HCT116 (cell line): ENCODE measurements at regions of chr22 and their contacts with region 1.

Region 1: DNA sequence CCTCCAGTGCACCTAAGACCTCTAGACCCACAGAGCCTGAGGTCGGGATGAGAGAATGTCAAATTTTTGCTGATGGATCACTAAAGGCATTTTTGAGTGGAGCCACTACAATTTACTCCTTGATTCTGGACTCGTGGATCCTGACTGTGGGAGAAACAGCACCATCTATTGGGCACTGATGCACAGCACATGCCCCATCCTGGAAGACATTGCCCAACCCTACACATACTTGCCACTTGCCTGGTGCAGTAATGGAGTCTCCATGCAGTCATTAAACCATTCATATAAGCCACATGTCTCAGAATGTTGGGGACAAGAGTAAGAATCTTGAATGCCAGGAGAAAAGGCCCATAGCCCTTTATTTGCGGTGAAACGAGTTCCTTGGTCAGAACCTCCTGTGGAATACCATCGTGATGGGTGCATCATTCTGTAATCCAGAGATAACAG is 103.9 kb downstream of the GGTLC2 start:
- DNase-seq: no peak
- ATAC-seq: peak; percentile 90
- H3K4me3 ChIP-seq: no peak overlapping the region
- H3K27ac ChIP-seq: no peak overlapping the region
- H3K4me1 ChIP-seq: peaks cover 0 to 4% of the 10 kb centered on the region in 2 experiments; a peak in 1 of 4 replicates
- H3K27me3 ChIP-seq: peaks cover 9% of the 10 kb centered on the region; the same call in 1 of the 2 replicates
- CTCF ChIP-seq: peak; percentile 63 to 79 (median 78); a peak in 5 of 6 replicates
- POLR2A ChIP-seq: no peak
- RAD21 ChIP-seq: peak; percentile 47

Region 2: DNA sequence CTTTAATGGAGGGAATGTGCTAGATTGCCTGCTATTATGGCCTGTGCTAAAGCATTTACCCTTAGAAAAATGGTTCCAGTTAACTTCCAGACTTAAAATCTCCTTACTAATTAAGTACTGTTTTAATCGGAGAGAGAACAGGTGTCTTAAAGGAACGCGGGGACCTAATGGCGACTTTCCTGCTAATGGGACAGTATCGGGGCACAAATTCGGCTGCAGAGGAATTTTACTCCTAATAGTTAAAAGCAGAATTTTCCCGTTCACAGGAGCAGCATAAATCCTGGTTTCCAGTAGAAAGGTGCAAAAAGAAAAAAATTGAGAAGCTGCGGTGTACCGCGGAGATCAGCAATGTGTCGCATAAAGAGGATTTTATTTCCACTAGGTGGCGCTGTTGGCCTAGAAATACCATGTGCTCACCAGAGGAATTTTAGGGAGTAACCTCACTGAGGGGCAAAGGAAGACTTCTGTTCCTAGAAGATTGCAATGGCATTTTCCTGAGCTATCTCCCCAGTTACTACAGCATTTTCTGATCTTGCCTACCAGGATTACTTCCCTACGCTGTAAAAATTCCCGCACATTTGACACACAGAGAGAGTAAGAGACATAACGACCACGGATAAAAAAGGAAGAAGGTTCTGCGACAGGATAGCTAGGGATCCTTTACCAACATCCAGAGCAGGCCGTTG is 284.3 kb before region 1 on chr22:
- CTCF ChIA-PET with region 1: interaction called, 10 read pairs
- POLR2A ChIA-PET with region 1: no interaction called
- RAD21 ChIA-PET with region 1: no interaction called
- intact Hi-C with region 1: loop called (anchors 10 kb)
- DNase-seq: peak; percentile 51
- ATAC-seq: peak; percentile 92
- H3K4me3 ChIP-seq: peak overlapping the region in 1 of 2 experiments; percentile 8; a peak in 1 of 4 replicates
- H3K27ac ChIP-seq: no peak overlapping the region
- H3K4me1 ChIP-seq: no peaks in the 10 kb centered on the region
- H3K27me3 ChIP-seq: no peaks in the 10 kb centered on the region
- CTCF ChIP-seq: peak; percentile 53 to 81 (median 59); a peak in 4 of 6 replicates
- POLR2A ChIP-seq: no peak
- RAD21 ChIP-seq: peak; percentile 78

Region 3: GRCh38 chr22:22666307-22667091 is 81.8 kb before region 1 on chr22:
- CTCF ChIA-PET with region 1: interaction called, 12 read pairs
- POLR2A ChIA-PET with region 1: no interaction called
- RAD21 ChIA-PET with region 1: no interaction called
- intact Hi-C with region 1: no loop called
- DNase-seq: no peak
- ATAC-seq: peak; percentile 99
- H3K4me3 ChIP-seq: no peak overlapping the region
- H3K27ac ChIP-seq: no peak overlapping the region
- H3K4me1 ChIP-seq: no peaks in the 10 kb centered on the region
- H3K27me3 ChIP-seq: no peaks in the 10 kb centered on the region
- CTCF ChIP-seq: peak; percentile 60 to 81 (median 64); a peak in 5 of 6 replicates
- POLR2A ChIP-seq: no peak
- RAD21 ChIP-seq: peak; percentile 51

Region 4: DNA sequence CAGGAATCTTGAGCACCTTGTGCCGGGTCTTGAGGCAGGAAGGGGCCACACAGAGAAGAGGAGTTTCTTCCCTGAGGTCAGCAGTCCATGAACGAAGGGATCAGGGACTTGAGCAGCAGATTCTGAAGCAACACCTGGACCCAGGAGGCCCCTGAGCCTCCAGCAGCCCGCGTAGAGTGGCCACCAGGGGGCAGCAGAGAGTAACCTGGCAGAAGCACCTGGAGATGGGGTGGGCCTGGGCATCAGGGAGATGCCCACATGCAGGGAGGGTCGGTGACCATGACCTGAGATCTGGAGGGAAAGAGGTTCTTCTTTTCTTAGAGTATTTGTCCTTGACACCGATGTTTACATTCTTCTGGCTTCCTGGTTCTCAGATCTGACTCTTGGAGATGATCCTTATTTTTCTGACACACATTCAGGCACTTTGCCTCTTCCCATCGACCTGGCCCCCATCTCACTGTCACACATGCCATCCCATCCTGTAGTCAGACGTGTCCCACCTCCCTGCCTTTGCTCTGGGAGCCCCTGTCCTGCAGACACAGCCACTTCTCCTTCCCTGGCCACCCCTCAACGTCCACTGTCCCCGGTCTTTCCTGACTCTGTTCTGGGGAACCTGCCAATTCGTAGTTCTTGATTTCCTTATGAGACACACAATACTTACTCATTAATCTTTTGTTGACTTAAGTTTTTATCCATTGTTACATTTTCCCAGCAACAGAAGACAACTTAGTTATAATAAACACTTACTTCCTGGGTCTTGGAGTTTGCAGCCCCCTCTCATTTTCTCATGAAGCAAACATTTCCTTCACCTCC is 37.4 kb before region 1 on chr22:
- CTCF ChIA-PET with region 1: interaction called, 10 read pairs
- POLR2A ChIA-PET with region 1: no interaction called
- RAD21 ChIA-PET with region 1: no interaction called
- intact Hi-C with region 1: no loop called
- DNase-seq: no peak
- ATAC-seq: peak; percentile 96
- H3K4me3 ChIP-seq: no peak overlapping the region
- H3K27ac ChIP-seq: no peak overlapping the region
- H3K4me1 ChIP-seq: no peaks in the 10 kb centered on the region
- H3K27me3 ChIP-seq: no peaks in the 10 kb centered on the region
- CTCF ChIP-seq: peak; percentile 61 to 98 (median 97); a peak in 5 of 6 replicates
- POLR2A ChIP-seq: no peak
- RAD21 ChIP-seq: peak; percentile 34; the same call in 1 of the 2 replicates

Region 5: GRCh38 chr22:22770280-22770871 is 22.1 kb after region 1 on chr22:
- CTCF ChIA-PET with region 1: interaction called, 22 read pairs
- POLR2A ChIA-PET with region 1: interaction called, 4 read pairs
- RAD21 ChIA-PET with region 1: interaction called in 1 of 2 experiments, 4 read pairs
- intact Hi-C with region 1: no loop called
- DNase-seq: no peak
- ATAC-seq: peak; percentile 96
- H3K4me3 ChIP-seq: no peak overlapping the region
- H3K27ac ChIP-seq: no peak overlapping the region
- H3K4me1 ChIP-seq: no peaks in the 10 kb centered on the region
- H3K27me3 ChIP-seq: peaks cover 8% of the 10 kb centered on the region; the same call in 1 of the 2 replicates
- CTCF ChIP-seq: peak; percentile 59 to 94 (median 90); a peak in 5 of 6 replicates
- POLR2A ChIP-seq: no peak
- RAD21 ChIP-seq: peak; percentile 38; the same call in 1 of the 2 replicates